ENCODE measurements at regions of chr18 and their contacts with region 1.

Region 1: DNA sequence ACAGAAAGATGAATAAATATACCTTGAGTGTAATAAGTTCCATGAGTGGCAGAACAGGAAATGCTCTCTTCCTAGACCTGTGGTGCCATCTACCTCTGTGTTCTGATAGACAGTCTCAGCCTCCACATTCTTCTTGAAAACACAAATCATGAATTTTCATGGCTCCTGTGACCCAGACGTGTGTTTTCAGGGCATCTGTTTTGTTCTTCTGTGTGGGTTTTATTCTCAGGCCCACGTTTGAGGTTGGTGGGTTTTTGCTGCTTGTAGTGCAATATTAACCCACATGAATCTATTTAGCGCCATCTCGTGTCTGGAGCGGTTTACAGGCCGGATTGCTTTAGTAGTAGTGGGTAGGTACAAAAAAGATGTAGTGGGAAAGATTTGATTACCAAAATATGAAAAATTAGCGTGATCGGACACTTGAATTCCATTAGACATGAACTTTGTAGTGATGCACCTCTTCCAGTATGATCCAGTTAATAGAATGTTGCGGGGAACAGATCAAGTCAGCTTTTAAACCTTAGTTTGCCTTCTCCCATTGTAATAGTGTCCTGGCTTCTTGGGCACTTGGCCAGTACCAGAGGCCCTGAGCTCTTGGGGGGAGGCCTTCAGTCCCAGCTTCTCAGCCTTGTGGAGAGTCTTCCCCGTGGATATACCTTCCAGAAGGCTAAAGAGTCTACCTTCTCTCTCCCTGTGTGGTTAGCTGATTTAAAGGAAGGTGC is 256.5 kb downstream of the TPGS2 start:
- DNase-seq: peak in 1 of 2 donors; percentile 41
- ATAC-seq: no peak
- H3K4me3 ChIP-seq: no peak overlapping the region
- H3K4me3 Mint-ChIP-seq: no peak overlapping the region
- H3K27ac ChIP-seq: no peak overlapping the region
- H3K27ac Mint-ChIP-seq: no peak overlapping the region
- H3K4me1 ChIP-seq: no peaks in the 10 kb centered on the region
- H3K4me1 Mint-ChIP-seq: no peaks in the 10 kb centered on the region
- H3K27me3 ChIP-seq: no peaks in the 10 kb centered on the region
- H3K27me3 Mint-ChIP-seq: peaks cover 7 to 20% of the 10 kb centered on the region in 2 donors
- CTCF ChIP-seq: no peak

Region 2: GRCh38 chr18:36015629-36016028 is 556.7 kb before region 1 on chr18:
- intact Hi-C with region 1: loop called (anchors 5 kb)
- DNase-seq: no peak
- ATAC-seq: no peak
- H3K4me3 ChIP-seq: no peak overlapping the region
- H3K4me3 Mint-ChIP-seq: no peak overlapping the region
- H3K27ac ChIP-seq: no peak overlapping the region
- H3K27ac Mint-ChIP-seq: no peak overlapping the region
- H3K4me1 ChIP-seq: no peaks in the 10 kb centered on the region
- H3K4me1 Mint-ChIP-seq: no peaks in the 10 kb centered on the region
- H3K27me3 ChIP-seq: no peaks in the 10 kb centered on the region
- H3K27me3 Mint-ChIP-seq: no peaks in the 10 kb centered on the region
- CTCF ChIP-seq: no peak